ENCODE measurements at regions of chr17 and their contacts with region 1.

Region 1: GRCh38 chr17:41688699-41689496 is at the start of gene EIF1:
- DNase-seq: peak; percentile 96
- H3K4me3 ChIP-seq: peak within 1 kb of the TSS; percentile 75 to 92
- H3K27ac ChIP-seq: peak within 1 kb of the TSS; percentile 98 to 100
- H3K4me1 ChIP-seq: peaks cover 13 to 21% of the 10 kb centered on the region in 2 experiments
- H3K27me3 ChIP-seq: no peaks in the 10 kb centered on the region
- CTCF ChIP-seq: no peak
- EP300 ChIP-seq: no peak
- RAD21 ChIP-seq: no peak
- polyA plus RNA-seq, gene EIF1: 300 and 336 TPM in 2 replicates

Region 2: GRCh38 chr17:41215681-41216080 is 473.2 kb before region 1 on chr17:
- CTCF ChIA-PET with region 1: no interaction called
- POLR2A ChIA-PET with region 1: no interaction called
- DNase-seq: no peak
- H3K4me3 ChIP-seq: no peak overlapping the region
- H3K27ac ChIP-seq: no peak overlapping the region
- H3K4me1 ChIP-seq: no peaks in the 10 kb centered on the region
- H3K27me3 ChIP-seq: peaks cover 44% of the 10 kb centered on the region; the same call in 1 of the 2 replicates
- CTCF ChIP-seq: no peak
- EP300 ChIP-seq: no peak
- RAD21 ChIP-seq: no peak

Region 3: GRCh38 chr17:41625602-41626001 is 63.3 kb before region 1 on chr17:
- CTCF ChIA-PET with region 1: no interaction called
- POLR2A ChIA-PET with region 1: no interaction called
- DNase-seq: no peak
- H3K4me3 ChIP-seq: no peak overlapping the region
- H3K27ac ChIP-seq: no peak overlapping the region
- H3K4me1 ChIP-seq: peaks cover 0 to 8% of the 10 kb centered on the region in 2 experiments; a peak in 1 of 4 replicates
- H3K27me3 ChIP-seq: no peaks in the 10 kb centered on the region
- CTCF ChIP-seq: no peak
- EP300 ChIP-seq: no peak
- RAD21 ChIP-seq: no peak

Region 4: DNA sequence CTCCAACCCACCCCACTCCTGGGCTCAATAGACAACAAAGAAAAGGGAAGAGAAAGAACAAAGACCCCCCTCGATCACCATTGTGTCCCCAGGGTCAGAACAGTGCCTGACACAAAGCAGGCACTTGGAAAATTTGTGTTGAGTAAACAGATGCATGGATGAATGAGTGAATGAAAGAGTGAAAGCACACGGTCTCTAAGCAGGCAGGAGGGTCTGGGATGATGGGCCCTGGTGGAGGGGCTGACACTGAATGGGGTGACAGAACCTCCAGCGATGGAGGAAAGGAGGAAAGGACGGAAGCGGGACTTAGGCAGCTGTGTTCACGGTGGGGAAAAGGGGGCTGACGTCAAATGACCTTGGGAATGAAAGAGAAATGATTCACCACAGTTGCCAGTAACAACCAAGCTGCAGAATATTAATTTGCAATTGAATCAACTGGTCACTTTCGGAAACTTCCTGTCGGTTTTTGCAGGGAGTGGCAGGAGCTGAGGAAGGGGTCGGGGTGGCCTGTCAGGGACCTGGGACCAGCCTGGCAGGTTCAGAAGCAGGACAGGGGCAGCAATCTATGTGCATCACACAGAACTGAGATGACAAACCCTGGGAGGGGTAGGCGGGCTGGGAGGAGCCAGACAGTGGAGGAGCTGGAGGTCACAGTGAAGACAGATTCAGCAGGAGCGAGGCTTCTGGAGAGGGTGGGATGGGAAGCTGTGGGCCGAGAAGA is 16.5 kb after region 1 on chr17:
- CTCF ChIA-PET with region 1: interaction called, 125 read pairs
- POLR2A ChIA-PET with region 1: interaction called, 5 read pairs
- DNase-seq: no peak
- H3K4me3 ChIP-seq: no peak overlapping the region
- H3K27ac ChIP-seq: no peak overlapping the region
- H3K4me1 ChIP-seq: no peaks in the 10 kb centered on the region; a peak in 1 of 4 replicates
- H3K27me3 ChIP-seq: no peaks in the 10 kb centered on the region
- CTCF ChIP-seq: no peak
- EP300 ChIP-seq: no peak
- RAD21 ChIP-seq: no peak

Region 5: GRCh38 chr17:41779954-41780353 is 91.1 kb after region 1 on chr17:
- CTCF ChIA-PET with region 1: no interaction called
- POLR2A ChIA-PET with region 1: no interaction called
- DNase-seq: no peak
- H3K4me3 ChIP-seq: no peak overlapping the region
- H3K27ac ChIP-seq: no peak overlapping the region
- H3K4me1 ChIP-seq: peaks cover 22 to 32% of the 10 kb centered on the region in 2 experiments
- H3K27me3 ChIP-seq: no peaks in the 10 kb centered on the region
- CTCF ChIP-seq: no peak
- EP300 ChIP-seq: no peak
- RAD21 ChIP-seq: no peak